Activated T-helper 1 cell treated with anti-CD3 and anti-CD28 coated beads, Interleukin-12 subunit alpha, Interleukin-12 subunit beta, Interleukin-2, Interleukin-4 antibody, amounts not matched to agents 30 ng/mL and 10 ng/mL and 1 ng/mL, durations not matched to agents 14 hours and 24 hours and 36 hours (primary cell): ENCODE measurements at regions of chr9 and their contacts with region 1.

Region 1: DNA sequence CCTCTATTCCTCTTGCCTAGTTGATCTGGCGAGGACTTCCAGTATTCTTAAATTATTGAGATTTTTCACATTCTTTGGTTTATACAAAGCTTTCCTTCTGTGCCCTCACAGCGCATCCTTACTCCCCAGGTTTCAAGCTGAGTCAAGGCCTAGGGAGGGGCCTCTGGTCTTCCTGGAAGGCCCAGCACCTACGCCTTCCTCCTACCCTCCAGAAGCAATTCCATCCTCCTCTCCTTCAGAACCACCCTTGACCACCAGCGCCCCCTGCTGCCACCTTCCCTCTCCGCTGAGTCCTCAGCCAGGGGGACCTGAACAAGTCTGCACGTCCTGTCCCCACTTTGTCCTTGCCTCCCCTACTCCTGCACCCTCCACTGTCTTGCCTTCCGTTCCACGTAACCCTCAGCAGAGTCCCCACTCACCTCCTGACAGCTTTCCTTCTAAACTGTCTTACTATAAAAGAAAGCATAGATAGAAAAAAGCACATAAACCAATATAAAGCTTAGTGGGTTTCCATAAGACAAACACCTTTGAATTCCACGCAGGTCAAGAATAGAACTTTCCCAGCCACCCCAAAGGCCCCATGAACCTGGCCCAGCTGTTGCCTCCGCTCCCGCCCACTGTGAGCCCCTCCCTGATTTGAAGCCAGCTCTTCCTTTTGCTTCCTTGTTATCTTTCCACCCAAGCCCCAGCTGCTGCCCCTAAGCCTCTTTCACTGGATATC is 63.0 kb upstream of the CTSL start:
- DNase-seq: no peak
- H3K4me3 Mint-ChIP-seq: no peak overlapping the region
- H3K27ac Mint-ChIP-seq: no peak overlapping the region
- H3K4me1 Mint-ChIP-seq: no peaks in the 10 kb centered on the region
- H3K27me3 Mint-ChIP-seq: no peaks in the 10 kb centered on the region

Region 2: GRCh38 chr9:86413966-86414880 is 1248.7 kb before region 1 on chr9:
- intact Hi-C with region 1: loop called (anchors 10 kb)
- DNase-seq: no peak
- H3K4me3 Mint-ChIP-seq: no peak overlapping the region
- H3K27ac Mint-ChIP-seq: no peak overlapping the region
- H3K4me1 Mint-ChIP-seq: no peaks in the 10 kb centered on the region
- H3K27me3 Mint-ChIP-seq: peaks cover 9% of the 10 kb centered on the region

Region 3: DNA sequence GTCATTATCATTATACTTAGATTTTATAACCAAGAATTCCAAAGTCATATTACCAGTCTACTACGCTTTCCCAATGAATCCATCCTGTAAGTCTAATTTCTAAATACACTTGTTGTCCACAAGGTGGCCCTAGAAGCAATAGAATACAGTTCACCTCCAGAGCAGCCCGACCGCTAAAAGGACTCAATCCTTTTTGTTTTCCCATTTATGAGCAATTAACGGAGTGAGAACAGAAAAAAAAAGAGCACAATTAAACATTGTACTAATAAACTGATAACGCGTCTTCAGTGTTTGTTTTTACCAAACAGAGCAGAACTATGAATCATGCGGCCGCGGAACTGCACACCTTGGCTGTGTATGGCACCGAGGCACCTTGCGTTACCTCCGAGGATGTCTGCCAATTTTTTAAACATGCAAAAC is 326.0 kb before region 1 on chr9:
- intact Hi-C with region 1: loop called (anchors 1 kb)
- DNase-seq: no peak
- H3K4me3 Mint-ChIP-seq: no peak overlapping the region
- H3K27ac Mint-ChIP-seq: no peak overlapping the region
- H3K4me1 Mint-ChIP-seq: peaks cover 7% of the 10 kb centered on the region
- H3K27me3 Mint-ChIP-seq: peaks cover 27% of the 10 kb centered on the region